ENCODE measurements at regions of chr1 and their contacts with region 1.

Region 1: DNA sequence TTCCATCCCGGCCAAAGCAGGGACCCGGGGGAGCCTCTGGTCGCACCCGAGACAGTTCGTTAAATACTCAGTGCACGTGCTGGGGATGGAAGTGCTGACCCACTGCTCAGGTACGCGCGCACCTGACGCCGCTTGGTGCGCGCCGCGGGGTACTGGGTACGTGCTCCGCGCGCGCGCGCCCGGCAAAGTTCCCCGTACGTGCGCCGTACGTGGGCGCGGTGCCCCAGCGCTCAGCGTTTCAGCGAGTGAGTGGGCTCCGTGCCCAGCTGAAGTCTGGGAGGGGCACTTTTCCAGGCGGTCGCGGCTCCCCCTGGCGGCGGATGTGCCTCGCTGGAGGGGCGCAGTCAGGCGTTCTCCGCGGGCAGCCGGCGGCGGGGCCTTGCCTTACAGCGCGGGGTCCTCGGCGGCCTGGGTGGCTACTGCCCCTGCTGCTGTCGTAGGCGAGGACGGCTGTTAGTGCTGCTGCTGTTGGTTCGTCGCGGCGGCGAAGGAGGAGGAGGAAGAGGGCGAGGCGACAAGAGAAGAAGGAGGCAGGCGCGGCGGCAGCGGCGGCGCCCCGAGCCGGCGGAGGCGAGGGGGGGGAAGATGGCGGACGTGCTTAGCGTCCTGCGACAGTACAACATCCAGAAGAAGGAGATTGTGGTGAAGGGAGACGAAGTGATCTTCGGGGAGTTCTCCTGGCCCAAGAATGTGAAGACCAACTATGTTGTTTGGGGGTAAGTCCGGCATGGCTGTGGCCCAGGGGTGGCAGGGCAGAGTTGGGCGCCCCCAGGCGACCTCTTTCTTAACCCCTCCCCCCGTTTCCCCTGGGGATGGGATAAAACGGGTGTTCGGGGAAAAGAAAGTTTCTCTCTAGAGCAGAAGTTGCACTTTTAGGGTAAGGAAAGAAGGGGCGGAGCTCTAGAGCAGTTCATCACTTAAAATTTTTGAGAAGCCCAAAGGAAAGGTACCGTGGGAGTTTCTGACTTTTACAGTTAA is at the start of gene CDC73:
- DNase-seq: peak; percentile 99
- total RNA-seq, gene CDC73: 57.7 TPM

Region 2: GRCh38 chr1:193059268-193060225 is 62.4 kb before region 1 on chr1 and contains the starts of genes RO60 and UCHL5:
- intact Hi-C with region 1: loop called (anchors 1 kb)
- DNase-seq: peak; percentile 99
- total RNA-seq, gene RO60: 61.6 TPM
- total RNA-seq, gene UCHL5: 26.4 TPM

Region 3: DNA sequence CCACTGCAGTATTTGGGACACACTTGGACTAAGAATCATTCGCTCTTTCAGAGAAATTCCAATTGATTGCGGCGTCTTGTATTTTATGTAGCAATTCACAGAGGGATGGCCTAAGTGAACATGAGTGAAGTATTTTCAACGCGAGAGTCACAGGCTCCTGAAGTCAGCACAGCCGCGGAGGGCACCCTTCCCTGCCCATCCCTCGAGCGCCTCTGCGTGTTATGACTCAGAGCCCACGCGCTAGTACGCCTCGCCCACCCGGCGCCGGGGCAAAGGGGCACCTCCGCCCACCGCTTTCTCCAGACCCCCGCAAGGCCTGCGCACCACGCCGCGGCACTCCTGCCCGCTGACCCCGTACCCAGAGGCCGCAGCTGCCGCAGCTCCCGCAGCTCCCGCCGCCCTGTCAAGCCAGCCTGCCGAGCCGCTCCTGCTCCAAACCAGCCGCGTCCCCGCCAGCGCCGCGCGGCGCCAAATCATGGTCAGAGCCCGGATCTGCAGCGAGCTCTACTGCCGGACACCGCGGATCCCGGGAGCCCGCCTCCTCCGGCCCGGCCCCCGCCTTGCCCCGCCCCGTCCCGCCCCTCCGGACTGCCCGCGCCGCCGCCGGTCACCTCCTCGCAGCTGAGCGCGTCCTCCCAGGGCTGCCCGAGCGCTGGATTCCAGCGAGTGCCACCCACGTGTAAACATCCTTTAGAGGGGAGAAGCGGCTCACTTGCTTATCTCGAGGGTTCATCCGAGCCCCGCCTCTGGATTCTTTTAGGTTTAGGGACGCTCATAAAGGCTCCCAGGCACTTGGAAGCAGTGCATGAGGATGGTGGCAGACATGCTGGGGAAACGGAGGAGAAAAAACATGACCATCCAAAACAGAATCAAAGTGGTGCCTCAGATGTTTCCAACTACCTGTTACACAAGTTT is 16.7 kb before region 1 on chr1 and contains the start of gene GLRX2:
- intact Hi-C with region 1: loop called (anchors 1 kb)
- DNase-seq: peak; percentile 95
- total RNA-seq, gene GLRX2: 29.0 TPM

Measured in cardiac septum (tissue), 1 donor.